ENCODE measurements at regions of chr3 and their contacts with region 1.

Region 1: DNA sequence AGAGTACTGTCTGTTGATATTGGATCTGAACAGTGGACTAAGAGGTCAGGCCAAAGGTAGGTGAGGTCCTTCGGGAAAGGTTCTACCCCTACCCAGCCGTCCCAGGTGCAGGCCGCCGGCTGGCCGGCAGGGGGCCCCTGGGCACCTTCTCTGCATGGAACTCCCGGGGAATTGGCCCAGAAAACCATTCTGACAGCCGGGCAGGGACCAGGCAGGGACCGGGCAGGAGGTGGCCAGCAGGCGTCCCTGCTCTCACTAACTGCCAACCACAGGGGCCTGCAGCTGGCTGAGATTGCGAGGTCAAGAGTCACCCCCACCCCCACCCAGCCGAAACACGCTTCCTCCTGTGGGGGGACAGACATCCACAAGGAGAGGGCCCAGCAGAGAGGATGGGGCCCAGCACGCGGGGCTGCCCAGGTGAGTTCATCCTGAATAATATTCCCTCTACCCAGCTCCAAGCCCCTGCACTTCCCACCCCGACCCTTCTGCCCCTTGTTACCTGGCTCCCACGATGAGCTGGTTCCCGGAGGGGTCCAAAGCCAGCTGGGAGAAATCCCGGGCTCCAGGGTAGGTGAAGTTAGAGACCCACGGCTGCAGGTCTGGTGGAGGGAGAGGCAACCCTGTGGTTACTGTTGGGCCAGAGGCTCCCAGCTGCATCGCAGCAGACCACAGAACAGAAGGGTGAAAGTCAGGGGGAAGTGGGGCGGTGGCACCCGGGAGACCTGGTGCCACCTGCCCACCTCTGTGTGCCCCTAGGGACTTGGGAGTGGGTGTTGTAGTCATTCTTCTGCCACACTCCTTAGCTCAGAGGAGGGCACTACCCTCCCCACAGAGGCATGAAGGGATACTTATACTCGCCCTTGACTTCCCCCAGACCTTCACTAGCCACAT is 84.4 kb downstream of the SEMA5B start:
- DNase-seq: peak; percentile 61
- ATAC-seq: peak; percentile 98
- H3K4me3 ChIP-seq: no peak overlapping the region
- H3K27ac ChIP-seq: no peak overlapping the region
- H3K4me1 ChIP-seq: peaks cover 18% of the 10 kb centered on the region
- H3K27me3 ChIP-seq: peaks cover 0 to 25% of the 10 kb centered on the region in 2 experiments; a peak in 3 of 5 replicates
- CTCF ChIP-seq: peak; percentile 90
- EP300 ChIP-seq: no peak
- POLR2A ChIP-seq: no peak
- RAD21 ChIP-seq: peak; percentile 94

Region 2: GRCh38 chr3:122754929-122755328 is 188.3 kb before region 1 on chr3:
- CTCF ChIA-PET with region 1: no interaction called
- POLR2A ChIA-PET with region 1: no interaction called
- in situ Hi-C with region 1: no loop called
- intact Hi-C with region 1: loop called (anchors 2 kb)
- DNase-seq: peak; percentile 51
- ATAC-seq: peak; percentile 96
- H3K4me3 ChIP-seq: no peak overlapping the region
- H3K27ac ChIP-seq: no peak overlapping the region
- H3K4me1 ChIP-seq: no peaks in the 10 kb centered on the region
- H3K27me3 ChIP-seq: no peaks in the 10 kb centered on the region
- CTCF ChIP-seq: peak; percentile 86
- EP300 ChIP-seq: no peak
- POLR2A ChIP-seq: no peak
- RAD21 ChIP-seq: peak; percentile 69

Region 3: DNA sequence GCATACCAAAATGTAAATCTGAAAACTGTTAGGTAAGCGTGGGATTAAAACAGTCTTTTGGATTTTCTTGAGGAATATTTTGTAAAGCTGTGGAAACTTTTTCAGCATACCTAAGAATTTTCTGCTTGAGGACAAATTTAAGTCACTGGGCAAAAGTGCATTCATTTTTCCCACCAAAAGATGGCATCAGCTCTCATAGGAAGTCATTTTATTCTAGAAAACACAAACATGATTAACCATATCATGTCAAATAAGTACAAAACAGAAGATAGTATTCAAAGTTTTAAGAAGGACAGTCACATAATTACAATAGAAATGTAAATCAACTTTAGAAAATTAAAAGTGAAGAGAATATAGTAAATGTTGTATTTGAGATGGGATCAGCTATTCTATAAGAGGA is 84.8 kb before region 1 on chr3:
- CTCF ChIA-PET with region 1: no interaction called
- POLR2A ChIA-PET with region 1: no interaction called
- in situ Hi-C with region 1: no loop called
- intact Hi-C with region 1: loop called (anchors 2 kb)
- DNase-seq: peak; percentile 12
- ATAC-seq: no peak
- H3K4me3 ChIP-seq: no peak overlapping the region
- H3K27ac ChIP-seq: no peak overlapping the region
- H3K4me1 ChIP-seq: peaks cover 20% of the 10 kb centered on the region
- H3K27me3 ChIP-seq: no peaks in the 10 kb centered on the region
- CTCF ChIP-seq: peak; percentile 48
- EP300 ChIP-seq: no peak
- POLR2A ChIP-seq: no peak
- RAD21 ChIP-seq: no peak

Region 4: DNA sequence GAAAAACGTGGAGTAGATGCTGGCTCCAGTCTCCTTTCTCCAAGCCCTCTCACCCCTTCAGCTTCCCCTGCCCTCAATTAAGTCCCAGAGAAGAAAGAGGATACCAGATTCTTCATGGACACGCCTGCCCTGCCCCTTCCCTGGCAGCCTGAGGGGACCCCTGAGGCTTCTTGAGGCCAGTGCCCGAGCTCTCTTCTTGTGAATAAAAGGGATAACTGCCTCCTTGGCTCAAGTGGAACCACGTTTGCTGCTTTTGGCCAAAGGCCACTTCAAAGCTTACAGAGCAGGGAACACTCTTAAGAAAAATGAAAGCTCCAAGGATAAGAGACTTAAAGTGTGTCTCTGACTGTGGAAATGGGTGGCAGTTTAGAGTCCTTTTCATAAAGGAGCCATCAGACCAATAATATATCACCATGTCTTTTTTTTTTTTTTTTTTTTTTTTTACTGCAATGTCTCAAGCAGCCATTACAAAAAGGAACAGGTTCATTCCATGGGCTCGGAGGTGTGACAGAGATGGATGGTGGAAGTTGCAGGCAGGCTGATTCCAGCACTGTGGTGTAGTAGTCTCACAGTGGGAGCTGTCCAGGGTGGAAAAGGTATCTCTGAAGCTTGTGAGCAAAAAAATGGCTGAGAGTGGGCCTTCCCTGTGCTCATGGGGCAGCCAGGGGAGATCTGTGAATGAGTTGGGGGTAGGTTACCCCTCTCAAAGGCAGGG is 24.4 kb before region 1 on chr3:
- CTCF ChIA-PET with region 1: no interaction called
- POLR2A ChIA-PET with region 1: no interaction called
- in situ Hi-C with region 1: no loop called
- intact Hi-C with region 1: no loop called
- DNase-seq: no peak
- ATAC-seq: no peak
- H3K4me3 ChIP-seq: no peak overlapping the region
- H3K27ac ChIP-seq: no peak overlapping the region
- H3K4me1 ChIP-seq: no peaks in the 10 kb centered on the region; the same call in 1 of the 2 replicates
- H3K27me3 ChIP-seq: peaks cover 9 to 50% of the 10 kb centered on the region in 2 experiments; a peak in 4 of 5 replicates
- CTCF ChIP-seq: no peak
- EP300 ChIP-seq: no peak
- POLR2A ChIP-seq: no peak
- RAD21 ChIP-seq: no peak

Region 5: GRCh38 chr3:123015557-123015956 is 72.4 kb after region 1 on chr3:
- CTCF ChIA-PET with region 1: no interaction called
- POLR2A ChIA-PET with region 1: no interaction called
- in situ Hi-C with region 1: no loop called
- intact Hi-C with region 1: loop called (anchors 1 kb)
- DNase-seq: no peak
- ATAC-seq: peak; percentile 59
- H3K4me3 ChIP-seq: no peak overlapping the region
- H3K27ac ChIP-seq: no peak overlapping the region
- H3K4me1 ChIP-seq: no peaks in the 10 kb centered on the region
- H3K27me3 ChIP-seq: peaks cover 8 to 62% of the 10 kb centered on the region in 2 experiments
- CTCF ChIP-seq: peak; percentile 38
- EP300 ChIP-seq: no peak
- POLR2A ChIP-seq: no peak
- RAD21 ChIP-seq: no peak

Region 6: GRCh38 chr3:123028233-123028828 is 85.1 kb after region 1 on chr3:
- CTCF ChIA-PET with region 1: interaction called, 5 read pairs
- POLR2A ChIA-PET with region 1: no interaction called
- in situ Hi-C with region 1: loop called (anchors 5 kb)
- intact Hi-C with region 1: loop called (anchors 1 kb)
- DNase-seq: peak; percentile 13
- ATAC-seq: peak; percentile 39
- H3K4me3 ChIP-seq: peak overlapping the region; percentile 54 to 69 (median 57)
- H3K27ac ChIP-seq: no peak overlapping the region
- H3K4me1 ChIP-seq: peaks cover 33% of the 10 kb centered on the region
- H3K27me3 ChIP-seq: peaks cover 13 to 62% of the 10 kb centered on the region in 2 experiments
- CTCF ChIP-seq: peak; percentile 62
- EP300 ChIP-seq: no peak
- POLR2A ChIP-seq: no peak
- RAD21 ChIP-seq: peak; percentile 22; the same call in 1 of the 2 replicates

Region 7: GRCh38 chr3:123053106-123053505 is 109.9 kb after region 1 on chr3:
- CTCF ChIA-PET with region 1: no interaction called
- POLR2A ChIA-PET with region 1: no interaction called
- in situ Hi-C with region 1: no loop called
- intact Hi-C with region 1: no loop called
- DNase-seq: no peak
- ATAC-seq: no peak
- H3K4me3 ChIP-seq: no peak overlapping the region
- H3K27ac ChIP-seq: no peak overlapping the region
- H3K4me1 ChIP-seq: peaks cover 7% of the 10 kb centered on the region; the same call in 1 of the 2 replicates
- H3K27me3 ChIP-seq: peaks cover 0 to 41% of the 10 kb centered on the region in 2 experiments
- CTCF ChIP-seq: no peak
- EP300 ChIP-seq: no peak
- POLR2A ChIP-seq: no peak
- RAD21 ChIP-seq: no peak

Region 8: DNA sequence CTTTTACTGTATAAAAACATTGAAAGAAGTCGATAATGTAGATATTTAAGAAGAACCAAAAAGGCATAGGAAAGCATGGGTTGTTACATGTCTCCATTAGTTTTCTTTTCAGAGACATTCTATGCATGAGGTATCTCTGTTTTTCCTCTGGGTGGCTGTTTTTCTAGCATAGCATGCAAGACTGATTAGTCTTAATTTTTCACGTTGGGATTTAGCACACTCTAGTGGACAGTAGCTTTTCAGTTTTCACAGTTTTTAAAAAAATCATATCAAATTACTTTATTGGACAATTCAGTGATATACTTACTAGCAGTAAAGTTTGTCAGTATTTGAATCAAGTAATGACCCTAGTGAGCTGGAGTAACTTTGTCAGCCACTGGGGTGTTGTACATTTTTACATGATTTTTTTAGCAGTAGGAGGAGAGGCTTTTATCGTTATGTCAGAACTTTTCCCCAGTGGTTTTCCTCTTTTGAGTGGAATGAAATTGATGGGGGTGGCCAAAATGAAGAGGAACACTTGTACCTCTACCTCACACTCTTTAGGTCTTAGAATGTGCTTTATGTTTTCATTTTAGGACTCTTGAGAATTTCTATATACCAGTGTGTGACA is 315.7 kb after region 1 on chr3:
- CTCF ChIA-PET with region 1: no interaction called
- POLR2A ChIA-PET with region 1: no interaction called
- in situ Hi-C with region 1: no loop called
- intact Hi-C with region 1: loop called (anchors 2 kb)
- DNase-seq: peak; percentile 43
- ATAC-seq: peak; percentile 80
- H3K4me3 ChIP-seq: no peak overlapping the region
- H3K27ac ChIP-seq: no peak overlapping the region
- H3K4me1 ChIP-seq: no peaks in the 10 kb centered on the region
- H3K27me3 ChIP-seq: no peaks in the 10 kb centered on the region; a peak in 1 of 5 replicates
- CTCF ChIP-seq: peak; percentile 48
- EP300 ChIP-seq: no peak
- POLR2A ChIP-seq: no peak
- RAD21 ChIP-seq: no peak

Measured in HepG2 (cell line).